ENCODE measurements at regions of chr15 and their contacts with region 1.

Region 1: DNA sequence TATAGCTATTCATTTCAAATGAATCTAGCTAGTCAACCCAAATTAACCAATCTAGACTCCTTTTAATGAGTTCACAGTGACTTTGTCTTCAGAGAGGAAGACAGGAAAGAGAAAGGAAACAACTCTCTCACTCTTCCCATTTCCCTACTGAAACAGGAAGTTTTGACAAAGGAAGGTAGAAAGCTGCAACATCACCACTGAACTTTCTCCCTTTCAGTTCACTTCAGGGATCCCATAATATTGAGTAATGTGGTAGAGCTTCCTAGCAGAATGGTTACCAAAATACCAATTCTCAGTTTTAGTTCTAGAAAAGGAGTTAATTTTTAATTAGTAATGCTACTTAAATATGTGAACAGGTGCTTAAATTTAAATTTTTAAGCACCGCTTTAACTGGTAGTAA is 7.5 kb downstream of the VPS13C start:
- DNase-seq: no peak
- ATAC-seq: no peak
- H3K4me3 ChIP-seq: no peak overlapping the region
- H3K27ac ChIP-seq: peak overlapping the region; percentile 24 to 48 (median 38)
- H3K4me1 ChIP-seq: peaks cover 37 to 38% of the 10 kb centered on the region in 2 donors
- H3K27me3 ChIP-seq: no peaks in the 10 kb centered on the region
- CTCF ChIP-seq: no peak
- POLR2A ChIP-seq: no peak

Region 2: DNA sequence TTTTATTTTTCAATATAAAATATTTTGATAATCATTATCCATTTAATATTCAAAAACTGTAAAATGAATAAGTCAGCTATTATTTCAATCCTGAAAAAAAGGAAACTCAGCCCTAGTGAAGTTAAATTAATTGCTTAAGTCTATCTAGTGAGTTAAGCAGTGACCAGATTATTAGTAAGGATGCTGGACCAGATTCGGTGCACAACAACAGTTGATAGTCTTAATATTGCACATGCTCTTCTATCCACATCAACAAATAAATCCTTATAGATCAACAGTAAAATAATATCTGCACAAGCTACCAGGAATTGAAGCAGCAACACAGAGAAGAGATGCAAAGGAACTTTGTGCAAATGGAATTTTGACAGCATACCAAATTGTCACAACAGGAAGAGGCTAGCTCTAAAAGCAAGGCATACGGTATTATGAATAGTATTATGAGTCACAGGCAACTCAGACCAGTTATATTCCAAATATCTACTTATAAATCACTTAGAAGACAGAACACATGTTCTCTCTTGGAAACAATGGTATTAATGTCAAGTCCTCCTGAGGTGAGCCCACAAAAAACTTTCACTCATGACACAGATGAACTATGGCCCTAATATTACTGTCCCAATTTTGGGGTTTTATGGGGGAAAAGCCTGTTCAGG is 17.3 kb before region 1 on chr15:
- in situ Hi-C with region 1: no loop called
- intact Hi-C with region 1: loop called (anchors 1 kb)
- DNase-seq: no peak
- ATAC-seq: peak; percentile 82 to 86
- H3K4me3 ChIP-seq: no peak overlapping the region
- H3K27ac ChIP-seq: peak overlapping the region; percentile 12 to 49 (median 38)
- H3K4me1 ChIP-seq: peaks cover 15 to 17% of the 10 kb centered on the region in 2 donors
- H3K27me3 ChIP-seq: no peaks in the 10 kb centered on the region
- CTCF ChIP-seq: no peak
- POLR2A ChIP-seq: no peak

Region 3: DNA sequence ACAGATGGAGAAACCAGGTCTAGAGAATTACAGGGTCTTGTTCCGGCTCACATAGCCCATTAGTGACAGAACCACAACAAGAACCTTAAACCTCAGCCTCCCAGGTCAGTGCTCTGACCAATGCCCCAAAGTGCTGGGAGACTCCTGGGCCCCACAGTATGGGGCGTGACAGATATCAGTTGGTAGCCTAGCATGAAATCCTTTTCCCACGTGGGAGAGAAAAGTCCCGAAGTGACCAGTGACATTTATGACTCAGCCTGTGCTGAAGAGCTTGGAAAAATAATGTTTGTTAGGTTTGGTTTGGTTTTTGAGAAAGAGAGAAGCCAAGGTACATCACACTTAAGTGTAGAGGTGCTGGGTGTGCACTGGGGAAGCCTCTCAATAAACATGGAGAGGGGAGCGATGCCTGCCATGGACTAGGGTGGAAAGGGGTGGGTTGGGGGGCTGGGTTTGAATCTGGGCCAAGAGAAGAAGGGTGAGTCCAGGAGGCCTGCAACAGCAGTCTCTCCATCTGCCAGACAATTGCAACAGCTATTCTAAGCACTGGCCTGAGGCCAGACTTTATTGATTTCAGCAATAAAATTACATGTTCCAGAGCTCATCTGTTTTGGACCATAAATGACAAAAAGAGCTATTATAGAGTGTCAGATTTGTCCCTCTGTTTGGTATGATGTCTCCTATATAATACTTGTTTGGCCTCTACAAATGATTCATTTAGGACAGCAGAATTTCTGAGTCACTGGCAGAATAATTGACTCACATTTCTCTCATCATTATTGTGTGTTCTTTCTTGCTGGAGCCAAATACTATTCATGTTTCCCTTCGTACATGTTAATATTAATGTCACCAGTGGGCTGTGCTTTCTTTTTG is 57.5 kb after region 1 on chr15:
- in situ Hi-C with region 1: no loop called
- intact Hi-C with region 1: no loop called
- DNase-seq: peak in 1 of 2 donors; percentile 26
- ATAC-seq: peak; percentile 49 to 51
- H3K4me3 ChIP-seq: no peak overlapping the region
- H3K27ac ChIP-seq: peak overlapping the region; percentile 55 to 74 (median 67)
- H3K4me1 ChIP-seq: peaks cover 10 to 42% of the 10 kb centered on the region in 2 donors
- H3K27me3 ChIP-seq: no peaks in the 10 kb centered on the region
- CTCF ChIP-seq: no peak
- POLR2A ChIP-seq: no peak